Mammary epithelial cell (primary cell): ENCODE measurements at regions of chr10 and their contacts with region 1.

Region 1: GRCh38 chr10:114304017-114304570 is 65.0 kb downstream of the VWA2 start:
- DNase-seq: peak; percentile 60
- H3K4me3 ChIP-seq: no peak overlapping the region
- H3K27ac ChIP-seq: no peak overlapping the region
- H3K4me1 ChIP-seq: peaks cover 46% of the 10 kb centered on the region
- H3K27me3 ChIP-seq: no peaks in the 10 kb centered on the region
- CTCF ChIP-seq: peak; percentile 67 to 76

Region 2: DNA sequence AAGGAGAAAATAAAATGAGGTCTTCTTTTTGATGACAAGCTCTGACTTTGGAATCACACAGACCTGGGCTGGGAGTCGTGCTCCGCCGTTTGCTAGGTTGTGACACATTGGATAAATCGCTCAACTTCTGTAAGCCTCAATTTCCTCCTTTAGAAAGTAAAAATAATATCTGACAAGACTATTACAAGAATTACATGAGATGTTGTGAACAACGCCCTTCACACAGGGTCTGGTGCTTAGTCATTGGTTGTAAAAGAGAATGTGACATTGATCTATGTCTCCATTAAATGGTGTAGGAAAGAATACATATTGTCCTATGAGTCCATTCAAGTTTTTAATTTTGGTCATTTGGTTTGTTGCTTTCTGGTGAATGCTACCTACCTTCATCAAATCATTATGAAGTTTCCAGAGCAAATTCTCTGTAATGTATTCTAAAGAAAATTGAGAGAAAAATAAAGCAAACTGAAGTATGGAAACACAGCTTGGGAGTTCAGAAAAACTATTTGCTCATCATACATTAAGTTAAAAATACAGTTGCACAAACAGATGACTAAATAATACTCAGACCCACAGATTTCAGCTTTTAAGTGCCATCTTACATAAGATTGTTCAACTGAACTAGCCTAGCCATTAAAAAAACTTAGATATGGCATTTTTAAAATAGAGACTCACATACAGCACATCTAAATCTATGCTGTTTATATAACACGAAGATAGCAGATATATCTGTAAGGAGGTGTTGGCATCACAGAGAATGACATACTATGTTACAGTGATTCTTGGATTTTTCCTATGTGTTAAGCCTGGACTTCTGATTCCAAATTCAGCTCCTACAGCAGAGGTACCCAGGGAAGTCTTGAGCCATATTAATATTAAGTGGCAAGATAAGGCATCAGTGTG is 272.8 kb before region 1 on chr10:
- CTCF ChIA-PET with region 1: no interaction called
- dilution Hi-C with region 1: no loop called
- in situ Hi-C with region 1: no loop called
- intact Hi-C with region 1: no loop called
- DNase-seq: no peak
- H3K4me3 ChIP-seq: no peak overlapping the region
- H3K27ac ChIP-seq: no peak overlapping the region
- H3K4me1 ChIP-seq: peaks cover 22% of the 10 kb centered on the region
- H3K27me3 ChIP-seq: no peaks in the 10 kb centered on the region
- CTCF ChIP-seq: no peak

Region 3: DNA sequence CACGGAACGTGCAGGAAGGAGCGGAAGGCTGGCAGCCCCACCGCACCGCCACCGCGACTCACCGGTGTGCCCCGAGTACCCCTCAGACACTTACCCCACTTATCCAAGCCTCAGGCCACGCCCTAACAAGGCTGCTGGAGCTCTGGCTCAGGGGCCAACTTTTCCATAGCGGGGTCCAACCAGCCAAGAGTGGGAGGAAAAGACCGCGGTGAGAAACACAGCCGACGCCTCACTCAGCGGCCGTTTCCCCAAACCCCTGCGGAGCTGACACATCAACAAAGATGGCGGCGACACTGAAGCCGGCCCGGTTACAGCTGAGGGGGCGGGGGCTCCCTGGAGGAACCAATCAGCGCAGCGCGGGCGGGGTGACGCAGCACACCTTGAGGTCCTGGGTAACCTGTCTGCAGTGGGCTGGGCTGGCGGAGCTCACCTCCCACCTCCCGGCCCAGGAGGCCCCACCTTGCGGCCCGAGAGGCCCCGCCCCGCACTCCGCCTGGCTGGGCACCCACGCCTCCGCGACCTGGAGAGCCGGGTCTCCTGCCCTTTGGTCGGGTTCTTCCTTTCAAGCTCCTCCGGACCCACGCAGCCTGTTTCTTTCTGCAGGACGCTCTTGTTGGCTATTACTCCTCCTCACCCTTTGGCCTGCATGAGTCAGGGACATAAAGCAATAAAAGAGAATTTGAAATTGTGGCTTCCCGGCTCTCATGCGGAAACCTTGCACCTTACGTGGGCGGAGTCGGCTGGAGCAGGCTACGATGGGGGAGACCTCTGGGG is 130.0 kb before region 1 on chr10 and contains the start of gene CCDC186:
- CTCF ChIA-PET with region 1: no interaction called
- dilution Hi-C with region 1: no loop called
- in situ Hi-C with region 1: no loop called
- intact Hi-C with region 1: loop called (anchors 1 kb)
- DNase-seq: peak; percentile 97
- H3K4me3 ChIP-seq: peak within 1 kb of the TSS; percentile 90 to 99 (median 99)
- H3K27ac ChIP-seq: peak within 1 kb of the TSS; percentile 88
- H3K4me1 ChIP-seq: peaks cover 9% of the 10 kb centered on the region
- H3K27me3 ChIP-seq: no peaks in the 10 kb centered on the region
- CTCF ChIP-seq: no peak
- total RNA-seq, gene CCDC186: 19.8 to 22.9 TPM

Region 4: DNA sequence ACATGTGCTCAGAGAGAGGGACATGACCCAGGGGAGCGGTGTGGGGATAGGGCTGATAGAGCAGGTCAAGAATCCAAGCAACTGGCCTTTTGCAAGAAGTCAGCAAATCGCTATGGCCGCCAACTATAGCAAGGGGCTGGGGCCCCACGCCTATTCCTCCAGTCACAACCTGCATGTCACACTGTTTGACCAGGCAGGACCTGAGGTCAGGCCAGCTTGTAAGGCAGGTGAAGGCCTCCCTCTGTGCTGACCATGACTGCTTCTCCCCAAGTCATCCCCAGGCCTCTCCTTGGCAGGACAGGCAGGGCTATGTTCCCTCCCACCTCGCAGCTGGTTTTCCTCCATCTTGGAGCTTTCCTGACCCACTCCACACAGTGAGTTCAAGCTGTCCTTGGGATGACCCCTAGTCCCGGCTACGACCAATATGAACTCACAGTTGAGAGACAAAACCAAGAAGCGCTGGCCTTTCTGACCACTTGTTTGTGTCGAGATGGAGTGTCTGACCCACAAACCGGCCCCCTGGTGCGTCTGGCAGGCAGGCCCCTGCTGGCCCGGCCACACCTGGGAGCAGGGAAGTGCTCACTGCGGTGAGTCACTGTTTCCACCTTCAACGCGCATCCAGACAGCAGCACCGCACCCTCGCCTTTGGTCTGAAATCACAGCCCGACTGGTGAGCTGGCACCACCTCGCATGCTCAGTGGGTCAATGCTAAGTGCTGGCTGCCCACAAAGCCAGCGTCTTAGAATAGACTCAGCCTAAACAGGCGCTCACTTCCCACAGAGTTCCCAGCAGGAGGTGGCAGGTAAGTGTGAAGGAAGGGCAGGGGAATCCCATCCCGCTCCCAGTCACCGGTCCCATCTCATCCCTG is 16.4 kb after region 1 on chr10:
- CTCF ChIA-PET with region 1: no interaction called
- dilution Hi-C with region 1: no loop called
- in situ Hi-C with region 1: no loop called
- intact Hi-C with region 1: loop called (anchors 1 kb)
- DNase-seq: peak; percentile 100
- H3K4me3 ChIP-seq: peak overlapping the region in 1 of 3 experiments; percentile 11
- H3K27ac ChIP-seq: peak overlapping the region; percentile 86
- H3K4me1 ChIP-seq: peaks cover 30% of the 10 kb centered on the region
- H3K27me3 ChIP-seq: no peaks in the 10 kb centered on the region
- CTCF ChIP-seq: peak in 1 of 2 donors; percentile 1

Region 5: GRCh38 chr10:114432566-114433093 is 128.5 kb after region 1 on chr10:
- CTCF ChIA-PET with region 1: interaction called, 4 read pairs
- dilution Hi-C with region 1: loop called (anchors 5 kb)
- in situ Hi-C with region 1: loop called in 1 of 2 experiments (anchors 10 kb)
- intact Hi-C with region 1: loop called (anchors 1 kb)
- DNase-seq: no peak
- H3K4me3 ChIP-seq: no peak overlapping the region
- H3K27ac ChIP-seq: no peak overlapping the region
- H3K4me1 ChIP-seq: peaks cover 16% of the 10 kb centered on the region
- H3K27me3 ChIP-seq: no peaks in the 10 kb centered on the region
- CTCF ChIP-seq: no peak

Region 6: GRCh38 chr10:114458955-114459354 is 154.9 kb after region 1 on chr10:
- CTCF ChIA-PET with region 1: no interaction called
- dilution Hi-C with region 1: loop called (anchors 5 kb)
- in situ Hi-C with region 1: no loop called
- intact Hi-C with region 1: loop called (anchors 1 kb)
- DNase-seq: peak; percentile 21
- H3K4me3 ChIP-seq: no peak overlapping the region
- H3K27ac ChIP-seq: no peak overlapping the region
- H3K4me1 ChIP-seq: no peaks in the 10 kb centered on the region
- H3K27me3 ChIP-seq: no peaks in the 10 kb centered on the region
- CTCF ChIP-seq: peak; percentile 55 to 57

Region 7: GRCh38 chr10:114779803-114780609 is 475.9 kb after region 1 on chr10:
- CTCF ChIA-PET with region 1: no interaction called
- dilution Hi-C with region 1: no loop called
- in situ Hi-C with region 1: loop called in 1 of 2 experiments (anchors 25 kb)
- intact Hi-C with region 1: no loop called
- DNase-seq: peak; percentile 83
- H3K4me3 ChIP-seq: no peak overlapping the region
- H3K27ac ChIP-seq: peak overlapping the region; percentile 75
- H3K4me1 ChIP-seq: peaks cover 24% of the 10 kb centered on the region
- H3K27me3 ChIP-seq: no peaks in the 10 kb centered on the region
- CTCF ChIP-seq: no peak